Naive thymus-derived CD4-positive, alpha-beta T cell (primary cell): ENCODE measurements at regions of chr20 and their contacts with region 1.

Region 1: DNA sequence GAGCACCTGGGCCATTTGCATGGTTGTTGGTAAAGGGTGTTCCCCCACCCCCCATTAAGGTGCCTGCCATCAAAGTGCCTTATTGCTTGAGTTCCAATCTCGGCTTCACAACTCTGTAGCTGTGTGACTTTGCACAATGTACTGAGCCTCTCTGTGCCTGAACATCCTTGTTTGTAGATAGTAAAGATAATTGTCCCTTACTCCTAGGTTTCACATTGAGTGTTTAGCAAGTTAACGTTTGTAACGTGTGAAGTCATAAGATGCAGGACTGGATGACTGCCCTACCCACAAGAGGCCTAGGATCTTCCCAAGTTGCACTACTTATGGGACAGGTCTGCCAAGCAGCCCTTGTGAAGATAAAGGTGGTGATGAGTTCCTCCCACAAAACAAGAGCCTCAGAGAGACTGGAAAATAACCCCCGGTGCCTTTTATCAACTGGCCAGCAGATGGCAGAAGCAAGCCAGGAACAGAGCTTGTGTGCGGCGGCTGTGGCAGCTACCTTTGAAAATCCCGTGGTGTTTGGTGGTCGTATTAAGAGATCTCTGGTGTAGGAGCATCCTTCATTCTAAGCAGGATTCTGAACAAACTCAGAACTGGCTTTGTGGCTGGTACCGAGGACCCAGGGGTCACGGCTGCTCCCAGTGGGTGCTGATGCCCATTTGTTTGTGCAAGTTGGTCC is 99.0 kb downstream of the CDH26 start:
- DNase-seq: peak; percentile 40 to 76 (median 68)
- ATAC-seq: peak; percentile 46
- H3K4me3 ChIP-seq: peak overlapping the region; percentile 41
- H3K4me3 Mint-ChIP-seq: peak overlapping the region; percentile 46 to 83 (median 58)
- H3K27ac ChIP-seq: no peak overlapping the region
- H3K27ac Mint-ChIP-seq: peak overlapping the region; percentile 4 to 90 (median 83)
- H3K4me1 ChIP-seq: peaks cover 46 to 47% of the 10 kb centered on the region in 2 donors
- H3K4me1 Mint-ChIP-seq: peaks cover 43 to 67% (median 58%) of the 10 kb centered on the region in 7 donors
- H3K27me3 ChIP-seq: no peaks in the 10 kb centered on the region
- H3K27me3 Mint-ChIP-seq: peaks cover 0 to 8% (median 0%) of the 10 kb centered on the region in 5 donors

Region 2: GRCh38 chr20:59940174-59940971 is 116.9 kb before region 1 on chr20 and contains the starts of genes FAM217B and PPP1R3D:
- CTCF ChIA-PET with region 1: interaction called, 13 read pairs
- POLR2A ChIA-PET with region 1: interaction called, 5 read pairs
- intact Hi-C with region 1: no loop called
- DNase-seq: peak; percentile 82 to 95 (median 86)
- ATAC-seq: peak; percentile 98
- H3K4me3 ChIP-seq: peak within 1 kb of the TSS; percentile 99
- H3K4me3 Mint-ChIP-seq: peak within 1 kb of the TSS; percentile 96 to 99 (median 98)
- H3K27ac ChIP-seq: peak within 1 kb of the TSS; percentile 79
- H3K27ac Mint-ChIP-seq: peak within 1 kb of the TSS; percentile 95 to 99 (median 97)
- H3K4me1 ChIP-seq: peaks cover 17 to 23% of the 10 kb centered on the region in 2 donors
- H3K4me1 Mint-ChIP-seq: peaks cover 29 to 65% (median 49%) of the 10 kb centered on the region in 7 donors
- H3K27me3 ChIP-seq: no peaks in the 10 kb centered on the region
- H3K27me3 Mint-ChIP-seq: no peaks in the 10 kb centered on the region
- total RNA-seq, gene FAM217B: 19.3 to 47.4 (median 32.6) TPM
- total RNA-seq, gene PPP1R3D: 4.1 to 11.8 (median 7.5) TPM

Region 3: GRCh38 chr20:60071965-60072364 is 14.7 kb after region 1 on chr20:
- CTCF ChIA-PET with region 1: no interaction called
- POLR2A ChIA-PET with region 1: no interaction called
- intact Hi-C with region 1: no loop called
- DNase-seq: no peak
- ATAC-seq: no peak
- H3K4me3 ChIP-seq: no peak overlapping the region
- H3K4me3 Mint-ChIP-seq: no peak overlapping the region
- H3K27ac ChIP-seq: no peak overlapping the region
- H3K27ac Mint-ChIP-seq: no peak overlapping the region
- H3K4me1 ChIP-seq: no peaks in the 10 kb centered on the region
- H3K4me1 Mint-ChIP-seq: peaks cover 0 to 8% (median 4%) of the 10 kb centered on the region in 7 donors
- H3K27me3 ChIP-seq: no peaks in the 10 kb centered on the region
- H3K27me3 Mint-ChIP-seq: peaks cover 0 to 7% (median 0%) of the 10 kb centered on the region in 5 donors

Region 4: DNA sequence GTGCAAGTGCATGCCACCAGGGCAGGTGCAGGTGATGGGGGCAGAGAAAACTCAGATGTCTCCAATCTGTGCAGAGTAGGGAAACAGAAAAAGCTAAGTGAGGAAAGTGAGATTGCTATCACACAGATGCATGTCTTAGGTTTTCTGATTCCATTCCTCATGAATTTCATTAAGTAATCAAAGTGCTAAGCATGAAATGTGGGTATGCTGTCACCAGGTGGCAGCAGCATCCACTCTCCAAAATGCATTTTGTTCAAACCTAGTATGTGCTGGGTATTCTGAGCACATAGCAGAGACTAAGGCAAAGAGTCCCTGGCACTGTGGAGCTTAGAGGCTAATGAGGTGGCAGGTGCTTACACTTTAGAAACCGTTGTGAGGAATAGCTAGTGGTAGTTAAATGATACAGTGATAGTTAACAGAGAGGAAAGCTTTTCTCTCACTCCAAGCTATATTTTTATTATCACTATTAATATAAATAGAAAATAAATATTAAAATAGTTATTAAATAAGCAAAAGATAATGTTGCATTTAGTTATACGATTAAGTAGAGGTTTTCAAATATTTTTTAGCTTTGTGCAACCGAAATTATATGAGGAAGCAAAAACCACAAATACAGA is 80.5 kb after region 1 on chr20:
- CTCF ChIA-PET with region 1: no interaction called
- POLR2A ChIA-PET with region 1: no interaction called
- intact Hi-C with region 1: loop called (anchors 5 to 10 kb)
- DNase-seq: peak in 4 of 9 donors; percentile 11 to 31 (median 18)
- ATAC-seq: peak; percentile 65
- H3K4me3 ChIP-seq: peak overlapping the region; percentile 48
- H3K4me3 Mint-ChIP-seq: peak overlapping the region; percentile 58 to 93 (median 80)
- H3K27ac ChIP-seq: no peak overlapping the region
- H3K27ac Mint-ChIP-seq: peak overlapping the region in 2 of 9 donors; percentile 4 to 33
- H3K4me1 ChIP-seq: no peaks in the 10 kb centered on the region
- H3K4me1 Mint-ChIP-seq: peaks cover 0 to 25% (median 14%) of the 10 kb centered on the region in 7 donors
- H3K27me3 ChIP-seq: no peaks in the 10 kb centered on the region
- H3K27me3 Mint-ChIP-seq: no peaks in the 10 kb centered on the region

Region 5: GRCh38 chr20:60262967-60263603 is 205.8 kb after region 1 on chr20:
- CTCF ChIA-PET with region 1: interaction called, 16 read pairs
- POLR2A ChIA-PET with region 1: no interaction called
- intact Hi-C with region 1: loop called in 1 of 2 experiments (anchors 1 kb)
- DNase-seq: peak in 8 of 9 donors; percentile 26 to 57 (median 43)
- ATAC-seq: peak; percentile 52
- H3K4me3 ChIP-seq: no peak overlapping the region
- H3K4me3 Mint-ChIP-seq: no peak overlapping the region
- H3K27ac ChIP-seq: no peak overlapping the region
- H3K27ac Mint-ChIP-seq: no peak overlapping the region
- H3K4me1 ChIP-seq: peaks cover 0 to 10% of the 10 kb centered on the region in 2 donors
- H3K4me1 Mint-ChIP-seq: peaks cover 4 to 33% (median 23%) of the 10 kb centered on the region in 7 donors
- H3K27me3 ChIP-seq: no peaks in the 10 kb centered on the region
- H3K27me3 Mint-ChIP-seq: no peaks in the 10 kb centered on the region

Region 6: DNA sequence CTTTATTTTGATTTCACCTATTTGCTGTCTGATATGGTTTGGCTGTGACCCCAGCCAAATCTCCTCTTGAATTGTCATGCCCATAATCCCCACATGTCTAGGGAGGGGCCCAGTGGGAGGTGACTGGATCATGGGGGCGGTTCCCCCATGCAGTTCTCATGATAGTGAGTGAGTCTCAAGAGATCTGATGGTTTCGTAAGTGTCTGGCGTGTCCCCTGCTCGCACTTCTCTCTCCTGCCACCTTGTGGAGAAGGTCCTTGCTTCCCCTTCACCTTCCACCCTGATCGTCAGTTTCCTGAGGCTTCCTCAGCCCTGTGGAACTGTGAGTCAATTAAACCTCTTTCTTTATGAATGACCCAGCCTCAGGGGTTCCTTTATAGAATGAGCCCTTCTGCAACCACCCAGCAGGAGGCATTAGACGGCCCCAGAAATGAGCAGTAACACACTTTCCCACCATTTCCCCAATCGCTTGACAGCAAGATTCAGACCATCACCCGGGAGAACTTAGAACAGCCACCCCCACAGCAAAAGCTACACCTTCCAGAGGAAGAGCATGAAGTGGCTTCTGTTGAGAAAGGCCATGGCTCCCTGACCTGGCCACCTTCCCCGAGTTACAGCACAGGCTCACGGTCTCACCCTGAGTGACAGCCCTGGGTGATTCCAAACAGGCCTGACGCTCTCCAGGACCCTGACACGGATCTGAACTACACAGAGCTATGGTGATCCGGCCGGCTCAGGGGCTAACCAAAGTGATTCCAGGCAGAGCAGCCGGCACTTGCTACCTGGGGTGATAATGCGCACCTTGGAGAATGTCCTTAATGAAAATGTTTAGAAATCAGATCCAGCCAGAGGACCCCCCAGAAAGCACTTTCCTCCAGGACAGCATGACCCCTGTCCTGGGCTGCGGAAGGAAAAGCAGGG is 1063.6 kb after region 1 on chr20:
- CTCF ChIA-PET with region 1: interaction called, 3 read pairs
- POLR2A ChIA-PET with region 1: no interaction called
- intact Hi-C with region 1: loop called in 1 of 2 experiments (anchors 2 kb)
- DNase-seq: peak in 7 of 9 donors; percentile 2 to 40 (median 23)
- ATAC-seq: peak; percentile 67
- H3K4me3 ChIP-seq: no peak overlapping the region
- H3K4me3 Mint-ChIP-seq: no peak overlapping the region
- H3K27ac ChIP-seq: no peak overlapping the region
- H3K27ac Mint-ChIP-seq: peak overlapping the region in 1 of 9 donors; percentile 26
- H3K4me1 ChIP-seq: no peaks in the 10 kb centered on the region
- H3K4me1 Mint-ChIP-seq: peaks cover 0 to 6% (median 5%) of the 10 kb centered on the region in 7 donors
- H3K27me3 ChIP-seq: no peaks in the 10 kb centered on the region
- H3K27me3 Mint-ChIP-seq: peaks cover 0 to 5% (median 0%) of the 10 kb centered on the region in 5 donors

Region 7: DNA sequence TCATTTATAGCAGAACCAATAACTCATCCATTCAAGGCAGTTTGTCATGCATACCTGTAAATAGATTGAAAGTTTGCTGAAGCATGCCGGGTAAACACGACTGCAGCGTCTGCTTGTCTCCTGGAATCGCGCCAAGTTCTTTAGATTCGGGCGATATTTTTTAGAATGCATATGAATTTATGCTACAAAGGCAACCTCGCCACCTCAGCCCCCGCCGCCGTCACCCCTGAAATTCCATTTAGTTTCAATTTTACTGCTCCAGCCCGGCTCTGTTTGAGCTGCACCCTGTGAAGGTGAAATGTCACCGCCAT is 1177.5 kb after region 1 on chr20:
- CTCF ChIA-PET with region 1: no interaction called
- POLR2A ChIA-PET with region 1: no interaction called
- intact Hi-C with region 1: loop called in 1 of 2 experiments (anchors 2 kb)
- DNase-seq: no peak
- ATAC-seq: no peak
- H3K4me3 ChIP-seq: no peak overlapping the region
- H3K4me3 Mint-ChIP-seq: no peak overlapping the region
- H3K27ac ChIP-seq: no peak overlapping the region
- H3K27ac Mint-ChIP-seq: no peak overlapping the region
- H3K4me1 ChIP-seq: no peaks in the 10 kb centered on the region
- H3K4me1 Mint-ChIP-seq: no peaks in the 10 kb centered on the region
- H3K27me3 ChIP-seq: no peaks in the 10 kb centered on the region
- H3K27me3 Mint-ChIP-seq: peaks cover 0 to 17% (median 5%) of the 10 kb centered on the region in 5 donors

Region 8: GRCh38 chr20:61263084-61263695 is 1205.9 kb after region 1 on chr20:
- CTCF ChIA-PET with region 1: interaction called, 3 read pairs
- POLR2A ChIA-PET with region 1: no interaction called
- intact Hi-C with region 1: loop called (anchors 1 to 10 kb)
- DNase-seq: peak in 5 of 9 donors; percentile 6 to 38 (median 8)
- ATAC-seq: no peak
- H3K4me3 ChIP-seq: no peak overlapping the region
- H3K4me3 Mint-ChIP-seq: no peak overlapping the region
- H3K27ac ChIP-seq: no peak overlapping the region
- H3K27ac Mint-ChIP-seq: no peak overlapping the region
- H3K4me1 ChIP-seq: no peaks in the 10 kb centered on the region
- H3K4me1 Mint-ChIP-seq: no peaks in the 10 kb centered on the region
- H3K27me3 ChIP-seq: peaks cover 0 to 3% of the 10 kb centered on the region in 2 donors
- H3K27me3 Mint-ChIP-seq: peaks cover 0 to 42% (median 20%) of the 10 kb centered on the region in 5 donors